ENCODE measurements at regions of chr6 and their contacts with region 1.

Region 1: GRCh38 chr6:593139-593906 is 63.6 kb downstream of the HUS1B start:
- DNase-seq: peak; percentile 78
- H3K4me3 Mint-ChIP-seq: no peak overlapping the region
- H3K27ac Mint-ChIP-seq: no peak overlapping the region
- H3K4me1 Mint-ChIP-seq: peaks cover 13% of the 10 kb centered on the region
- H3K27me3 Mint-ChIP-seq: no peaks in the 10 kb centered on the region

Region 2: DNA sequence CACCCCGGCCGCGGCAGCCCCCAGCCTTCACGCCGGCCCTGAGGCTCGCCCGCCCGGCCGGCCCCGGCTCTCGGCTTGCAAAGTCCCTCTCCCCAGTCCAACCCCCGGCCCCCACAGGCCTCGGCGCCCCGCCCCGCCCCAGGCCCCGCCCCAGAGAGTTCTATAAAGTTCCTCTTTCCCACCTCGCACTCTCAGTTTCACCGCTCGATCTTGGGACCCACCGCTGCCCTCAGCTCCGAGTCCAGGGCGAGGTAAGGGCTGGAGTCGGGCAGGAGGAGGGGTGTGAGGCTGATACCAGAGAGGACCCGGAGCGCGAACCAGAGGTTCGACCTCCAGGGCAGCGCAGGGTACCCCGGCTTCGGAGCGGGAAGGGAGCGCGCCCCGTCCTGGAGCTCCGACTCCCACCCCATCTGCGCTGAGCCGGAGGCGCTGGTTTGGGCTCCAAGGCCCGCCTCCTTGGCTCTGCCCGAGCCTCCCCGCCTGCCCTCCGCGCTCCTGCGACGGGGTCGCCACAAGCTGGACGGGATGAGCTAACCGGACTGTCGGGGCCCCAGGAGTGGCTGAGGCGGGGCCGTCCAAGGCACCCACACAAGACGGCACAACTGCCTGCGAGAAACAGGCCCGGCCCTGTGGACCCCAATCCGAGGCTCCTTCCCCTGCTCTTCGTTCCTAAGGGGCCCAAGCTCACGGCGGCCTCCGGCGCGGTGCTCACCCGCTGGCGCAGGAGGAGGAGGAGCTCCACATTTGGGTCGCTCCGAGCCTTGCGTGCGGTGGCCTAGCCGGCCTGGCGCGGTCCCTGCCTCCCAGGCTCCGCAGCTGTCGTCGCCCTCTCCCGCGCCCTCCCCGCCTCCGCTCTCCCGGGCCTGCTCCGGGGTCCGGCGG is 201.5 kb before region 1 on chr6 and contains the start of gene IRF4:
- CTCF ChIA-PET with region 1: interaction called, 30 read pairs
- DNase-seq: peak; percentile 81
- H3K4me3 Mint-ChIP-seq: peak within 1 kb of the TSS; percentile 89
- H3K27ac Mint-ChIP-seq: peak within 1 kb of the TSS; percentile 97
- H3K4me1 Mint-ChIP-seq: peaks cover 54% of the 10 kb centered on the region
- H3K27me3 Mint-ChIP-seq: peaks cover 6% of the 10 kb centered on the region

Region 3: GRCh38 chr6:582370-582769 is 11.0 kb before region 1 on chr6:
- CTCF ChIA-PET with region 1: interaction called, 16 read pairs
- DNase-seq: no peak
- H3K4me3 Mint-ChIP-seq: peak overlapping the region; percentile 40
- H3K27ac Mint-ChIP-seq: no peak overlapping the region
- H3K4me1 Mint-ChIP-seq: peaks cover 41% of the 10 kb centered on the region
- H3K27me3 Mint-ChIP-seq: no peaks in the 10 kb centered on the region

Region 4: DNA sequence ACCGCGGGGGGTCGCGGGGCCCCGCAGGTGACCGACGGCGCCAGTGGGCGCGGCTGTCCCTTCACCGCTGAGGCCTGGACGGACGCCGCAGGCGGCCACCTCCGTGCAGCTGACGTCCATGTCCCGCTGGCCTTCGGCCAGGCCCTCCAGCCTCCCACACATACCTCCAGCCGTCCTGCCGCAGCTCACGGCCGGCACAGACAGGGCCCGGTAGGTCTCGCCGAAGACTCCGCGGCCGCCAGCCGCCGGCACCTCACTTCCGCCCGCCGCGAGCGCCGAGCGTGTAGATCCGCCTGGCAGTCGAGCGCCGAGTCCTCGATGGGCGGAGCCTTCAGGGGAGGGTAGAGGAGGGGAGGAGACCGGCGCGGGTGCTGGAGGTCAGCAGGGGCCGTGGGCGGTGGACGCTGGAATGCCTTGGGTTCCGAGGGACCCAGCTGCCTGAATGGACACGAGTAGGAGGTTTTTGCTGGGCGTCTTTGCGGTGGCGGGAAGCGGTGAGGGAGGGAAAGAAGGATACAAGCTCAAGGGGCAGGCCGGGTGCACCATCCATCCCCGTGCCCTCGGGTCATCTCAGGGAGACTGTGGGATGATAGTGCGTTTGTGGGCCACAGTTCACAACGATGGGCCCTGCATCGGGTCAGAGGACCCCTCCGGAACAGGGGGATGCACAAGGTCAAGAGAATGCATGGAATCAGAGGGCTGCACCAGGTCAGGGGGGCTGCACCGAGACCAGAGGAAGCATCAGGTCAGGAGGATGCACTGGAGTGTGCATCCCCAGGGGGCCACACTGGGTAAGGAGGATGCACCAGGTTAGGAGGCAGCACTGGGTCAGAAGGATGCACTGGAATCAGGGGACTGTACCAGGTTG is 99.8 kb after region 1 on chr6 and contains the start of gene EXOC2:
- CTCF ChIA-PET with region 1: no interaction called
- DNase-seq: peak; percentile 90
- H3K4me3 Mint-ChIP-seq: peak within 1 kb of the TSS; percentile 96
- H3K27ac Mint-ChIP-seq: peak within 1 kb of the TSS; percentile 91
- H3K4me1 Mint-ChIP-seq: peaks cover 31% of the 10 kb centered on the region
- H3K27me3 Mint-ChIP-seq: no peaks in the 10 kb centered on the region

Region 5: DNA sequence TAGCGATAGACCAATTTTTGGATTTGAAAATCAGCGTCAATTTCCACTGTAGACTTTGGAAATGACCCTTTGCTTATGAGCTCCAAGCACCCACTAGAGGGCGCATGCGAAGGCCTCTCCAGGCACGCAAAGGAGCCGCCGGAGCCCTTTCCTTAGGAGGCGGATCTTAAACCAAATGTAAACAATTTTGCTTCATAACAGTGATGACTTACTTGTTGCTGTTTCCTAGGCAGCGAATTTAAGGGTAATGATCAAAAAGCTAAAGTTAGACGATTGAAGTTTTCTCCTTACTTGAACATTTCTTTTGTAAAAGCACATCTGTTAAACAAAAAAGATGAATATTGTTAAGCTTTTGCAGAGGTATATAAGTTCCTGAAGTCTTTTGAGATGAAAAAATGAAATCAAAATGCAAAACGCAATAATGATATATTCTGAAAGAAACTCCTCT is 128.8 kb after region 1 on chr6:
- CTCF ChIA-PET with region 1: interaction called, 15 read pairs
- DNase-seq: peak; percentile 84
- H3K4me3 Mint-ChIP-seq: no peak overlapping the region
- H3K27ac Mint-ChIP-seq: no peak overlapping the region
- H3K4me1 Mint-ChIP-seq: peaks cover 7% of the 10 kb centered on the region
- H3K27me3 Mint-ChIP-seq: peaks cover 45% of the 10 kb centered on the region

Region 6: GRCh38 chr6:1396952-1397868 is 803.9 kb after region 1 on chr6:
- CTCF ChIA-PET with region 1: interaction called, 11 read pairs
- DNase-seq: peak; percentile 77
- H3K4me3 Mint-ChIP-seq: no peak overlapping the region
- H3K27ac Mint-ChIP-seq: no peak overlapping the region
- H3K4me1 Mint-ChIP-seq: peaks cover 3% of the 10 kb centered on the region
- H3K27me3 Mint-ChIP-seq: peaks cover 69% of the 10 kb centered on the region